ENCODE measurements at regions of chr11 and their contacts with region 1.

Region 1: DNA sequence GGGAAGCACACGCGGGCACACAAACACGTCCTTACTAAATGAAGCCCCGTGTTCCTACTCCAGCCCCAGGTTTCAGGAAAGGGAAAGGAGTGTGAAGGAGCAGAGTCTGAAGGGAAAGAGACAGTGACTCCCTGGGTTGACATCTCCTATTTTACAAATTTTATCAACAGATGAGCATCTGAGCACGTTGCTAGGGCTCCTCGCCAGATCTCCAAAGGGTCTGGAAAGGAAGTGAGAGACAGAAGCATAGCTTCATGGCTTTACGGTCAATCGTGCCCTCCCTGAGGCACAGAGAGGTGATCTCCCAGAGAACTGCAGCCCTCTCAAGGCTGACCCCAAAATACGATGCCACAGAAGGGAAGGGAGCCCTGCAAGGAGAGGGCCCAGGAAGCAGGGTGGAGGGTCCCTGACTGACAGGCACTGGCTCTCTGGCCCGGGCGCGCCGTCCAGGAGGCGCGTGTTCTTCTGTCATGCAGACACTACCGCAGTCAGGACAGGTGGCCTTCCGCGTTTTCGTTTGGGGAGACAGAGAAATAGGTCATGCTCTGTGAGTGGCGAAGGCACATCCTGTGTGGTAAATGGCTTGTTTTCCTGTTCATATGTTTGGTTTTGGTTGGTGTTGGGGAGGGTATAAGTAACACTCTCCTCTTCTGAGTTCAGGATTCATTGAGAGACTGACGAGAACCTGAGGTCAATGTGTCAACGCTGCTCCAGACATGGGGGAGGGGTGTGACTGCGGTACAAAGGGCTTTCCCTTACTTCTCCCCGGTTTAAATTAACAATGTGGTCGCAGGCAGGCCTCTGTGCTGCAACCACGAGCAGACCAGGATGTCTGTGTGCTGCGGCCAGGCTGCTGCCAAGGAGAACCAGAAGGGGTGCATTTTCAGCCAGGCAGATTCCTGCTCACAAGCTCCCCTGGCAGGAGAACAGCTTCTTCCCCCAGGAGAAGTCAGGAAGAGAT is 813.3 kb downstream of the OPCML start:
- DNase-seq: peak; percentile 29
- H3K4me3 ChIP-seq: no peak overlapping the region
- CTCF ChIP-seq: peak; percentile 19

Region 2: GRCh38 chr11:132504501-132505041 is 214.4 kb before region 1 on chr11:
- CTCF ChIA-PET with region 1: no interaction called
- POLR2A ChIA-PET with region 1: no interaction called
- DNase-seq: no peak
- H3K4me3 ChIP-seq: no peak overlapping the region
- CTCF ChIP-seq: no peak

Region 3: DNA sequence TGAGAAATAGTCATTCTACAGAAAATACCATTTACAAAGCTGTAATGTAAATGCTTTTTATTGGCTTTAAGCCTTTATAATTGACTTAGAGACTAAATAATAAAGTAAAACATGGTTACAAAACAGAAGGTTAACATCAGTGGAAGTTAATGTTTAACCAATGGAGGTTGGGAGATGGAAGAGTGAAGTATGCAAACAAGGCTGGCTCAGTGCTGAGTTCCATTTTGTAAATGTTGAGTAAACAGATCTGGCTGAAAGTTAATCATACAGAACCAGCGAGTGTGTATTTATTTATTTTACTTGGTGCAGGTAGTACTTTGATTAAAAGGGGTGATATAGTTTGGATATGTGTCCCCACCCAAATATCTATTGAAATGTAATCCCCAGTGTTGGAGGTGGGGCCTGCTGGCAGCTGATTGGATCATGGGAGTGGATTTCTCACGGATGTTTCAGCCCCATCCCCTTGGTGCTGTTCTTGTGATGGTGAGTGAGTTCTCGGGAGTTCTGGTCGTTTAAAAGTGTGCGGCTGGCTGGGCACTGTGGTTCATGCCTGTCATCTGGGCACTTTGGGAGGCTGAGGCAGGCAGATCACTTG is 14.1 kb before region 1 on chr11:
- CTCF ChIA-PET with region 1: interaction called, 13 read pairs
- POLR2A ChIA-PET with region 1: no interaction called
- DNase-seq: no peak
- H3K4me3 ChIP-seq: no peak overlapping the region
- CTCF ChIP-seq: no peak

Region 4: DNA sequence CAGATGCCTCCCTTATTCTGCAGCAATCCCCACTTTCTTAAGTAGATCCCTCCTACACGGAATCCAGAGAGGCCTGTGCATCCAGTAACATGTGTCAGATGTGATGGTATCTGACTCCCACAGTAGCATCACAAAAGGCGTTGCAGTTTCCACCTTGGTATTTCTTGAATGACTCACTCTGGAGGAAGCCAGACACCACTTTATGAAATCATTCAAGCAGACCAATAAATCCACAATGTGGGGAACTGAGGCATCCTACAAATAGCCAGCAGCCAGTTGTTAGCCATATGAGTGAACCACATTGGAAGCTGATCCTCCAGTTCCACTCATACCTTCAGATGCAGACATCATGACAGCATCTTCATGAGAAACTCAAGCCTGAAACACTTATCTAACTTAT is 15.2 kb after region 1 on chr11:
- CTCF ChIA-PET with region 1: interaction called, 11 read pairs
- POLR2A ChIA-PET with region 1: no interaction called
- DNase-seq: peak; percentile 99
- H3K4me3 ChIP-seq: no peak overlapping the region
- CTCF ChIP-seq: no peak